Activated naive CD4-positive, alpha-beta T cell treated with anti-CD3 and anti-CD28 coated beads for 36 hours (primary cell): ENCODE measurements at regions of chr17 and their contacts with region 1.

Region 1: DNA sequence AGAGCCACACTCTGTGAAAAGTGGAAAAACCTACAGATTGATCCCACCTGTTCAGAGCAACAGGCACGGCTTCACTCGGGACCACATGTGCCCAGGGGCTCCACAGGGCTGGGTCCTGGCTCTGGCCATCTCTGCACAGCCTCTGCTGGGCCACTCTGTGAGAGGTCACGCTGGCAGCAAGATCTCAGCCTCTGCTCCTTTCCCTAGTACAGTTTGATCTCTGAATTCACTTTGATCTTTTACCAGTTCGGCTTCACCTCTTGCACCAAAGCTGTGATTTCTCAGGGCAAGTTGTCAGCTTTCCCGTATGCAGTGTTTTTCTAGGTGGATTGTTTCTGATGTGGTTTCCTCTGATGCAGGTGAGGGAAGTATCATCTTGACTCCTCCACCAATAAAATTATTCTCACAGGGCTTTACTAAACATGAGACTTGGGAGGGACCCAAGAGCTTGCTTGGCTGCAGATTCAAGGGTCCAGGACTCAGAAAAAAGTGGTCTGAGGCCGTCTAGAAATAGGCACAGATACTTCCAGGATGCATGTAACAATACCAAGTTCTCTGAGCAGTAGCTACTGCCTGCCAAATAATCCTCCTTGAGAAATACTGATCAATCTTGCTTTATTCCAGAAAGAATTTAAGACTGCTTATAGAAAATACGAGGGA is 24.0 kb upstream of the ALDH3A1 start:
- DNase-seq: peak; percentile 70
- H3K4me3 Mint-ChIP-seq: peak overlapping the region; percentile 25
- H3K27ac Mint-ChIP-seq: peak overlapping the region; percentile 73
- H3K4me1 Mint-ChIP-seq: peaks cover 70% of the 10 kb centered on the region
- H3K27me3 Mint-ChIP-seq: no peaks in the 10 kb centered on the region

Region 2: DNA sequence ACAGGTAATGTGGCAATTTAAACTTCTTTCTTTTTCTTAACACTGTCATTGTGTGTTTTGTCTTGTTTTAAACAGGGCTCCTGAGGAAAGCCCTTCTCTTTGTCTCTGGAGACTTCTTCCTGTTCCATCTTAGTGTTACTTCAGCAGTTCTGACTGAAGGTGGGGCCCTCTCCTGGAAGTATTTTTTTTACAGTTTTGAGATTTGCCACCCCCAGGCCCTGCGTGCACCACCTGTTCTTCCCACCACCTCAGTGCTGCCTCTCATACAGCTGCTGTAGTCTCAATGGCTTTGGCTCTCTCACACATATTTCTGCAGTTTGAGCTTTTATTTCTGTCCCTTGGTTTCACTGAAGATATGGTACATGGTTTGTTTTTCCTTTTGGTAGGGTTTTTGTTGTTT is 28.5 kb after region 1 on chr17:
- CTCF ChIA-PET with region 1: interaction called, 4 read pairs
- intact Hi-C with region 1: loop called (anchors 2 kb)
- DNase-seq: peak; percentile 42
- H3K4me3 Mint-ChIP-seq: no peak overlapping the region
- H3K27ac Mint-ChIP-seq: peak overlapping the region; percentile 69
- H3K4me1 Mint-ChIP-seq: peaks cover 13% of the 10 kb centered on the region
- H3K27me3 Mint-ChIP-seq: no peaks in the 10 kb centered on the region

Region 3: DNA sequence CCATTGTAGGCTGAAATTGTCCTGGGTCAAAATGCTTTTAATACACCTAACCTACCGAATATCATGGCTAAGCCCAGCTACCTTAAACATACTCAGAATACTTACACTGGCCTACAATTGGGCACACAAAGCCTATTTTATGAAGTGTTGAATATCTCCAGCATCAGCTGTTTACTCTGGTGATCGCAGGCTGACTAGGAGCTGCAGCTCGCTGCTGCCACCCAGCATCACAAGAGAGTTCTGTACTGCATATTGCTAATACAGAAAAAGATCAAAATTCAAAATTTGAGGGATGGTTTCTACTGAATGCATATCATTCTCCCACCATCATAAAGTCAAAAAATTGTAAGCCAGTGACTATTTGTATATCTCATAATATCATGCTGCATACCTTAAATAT is 40.3 kb after region 1 on chr17:
- CTCF ChIA-PET with region 1: interaction called, 5 read pairs
- intact Hi-C with region 1: loop called (anchors 2 kb)
- DNase-seq: peak; percentile 37
- H3K4me3 Mint-ChIP-seq: no peak overlapping the region
- H3K27ac Mint-ChIP-seq: no peak overlapping the region
- H3K4me1 Mint-ChIP-seq: no peaks in the 10 kb centered on the region
- H3K27me3 Mint-ChIP-seq: no peaks in the 10 kb centered on the region

Region 4: DNA sequence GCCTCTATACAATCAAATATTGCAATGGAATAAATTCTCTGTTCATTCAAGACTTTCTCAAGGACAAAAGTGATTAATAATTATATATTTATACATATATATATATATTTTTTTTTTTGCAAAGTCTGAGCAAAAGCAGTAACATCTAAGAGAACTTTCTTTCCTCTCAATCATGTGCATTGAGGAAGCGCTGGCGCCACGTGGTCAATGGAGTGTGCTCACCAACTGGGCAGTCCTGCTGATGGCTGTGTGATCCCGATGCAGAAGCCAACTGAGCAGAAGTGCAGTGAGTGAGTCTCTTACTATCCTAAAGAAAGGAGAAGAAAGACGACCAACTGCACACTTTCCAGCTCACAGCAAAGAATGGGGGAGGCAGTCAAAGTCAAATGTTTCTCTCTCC is 132.8 kb after region 1 on chr17:
- CTCF ChIA-PET with region 1: no interaction called
- intact Hi-C with region 1: no loop called
- DNase-seq: no peak
- H3K4me3 Mint-ChIP-seq: no peak overlapping the region
- H3K27ac Mint-ChIP-seq: no peak overlapping the region
- H3K4me1 Mint-ChIP-seq: peaks cover 4% of the 10 kb centered on the region
- H3K27me3 Mint-ChIP-seq: no peaks in the 10 kb centered on the region

Region 5: GRCh38 chr17:20189302-20189701 is 417.2 kb after region 1 on chr17:
- CTCF ChIA-PET with region 1: no interaction called
- intact Hi-C with region 1: no loop called
- DNase-seq: no peak
- H3K4me3 Mint-ChIP-seq: no peak overlapping the region
- H3K27ac Mint-ChIP-seq: no peak overlapping the region
- H3K4me1 Mint-ChIP-seq: peaks cover 3% of the 10 kb centered on the region
- H3K27me3 Mint-ChIP-seq: no peaks in the 10 kb centered on the region